CD8-positive, alpha-beta T cell (primary cell): ENCODE measurements at regions of chr3 and their contacts with region 1.

Region 1: DNA sequence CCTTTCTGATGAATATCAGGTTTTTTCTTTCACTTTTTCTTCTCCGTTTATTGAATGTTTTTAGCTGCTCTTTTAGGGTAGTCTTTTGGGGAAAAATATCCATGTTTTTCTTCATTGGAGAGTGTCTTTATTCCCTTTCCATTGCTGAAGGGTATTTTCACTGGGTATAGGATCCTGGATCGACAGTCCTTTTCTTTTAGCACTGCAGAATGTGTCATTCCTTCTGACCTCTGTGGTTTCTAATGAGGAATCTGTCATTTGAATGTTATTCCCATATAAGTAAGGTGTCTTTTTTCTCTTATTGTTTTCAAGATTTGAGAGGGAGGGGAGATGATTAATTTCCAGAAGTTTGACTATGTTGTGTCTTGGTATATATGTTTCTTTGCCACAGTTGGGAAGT is 96.8 kb downstream of the BBX start:
- DNase-seq: no peak
- ATAC-seq: no peak
- H3K4me3 ChIP-seq: no peak overlapping the region
- H3K4me3 Mint-ChIP-seq: no peak overlapping the region
- H3K27ac ChIP-seq: no peak overlapping the region
- H3K27ac Mint-ChIP-seq: no peak overlapping the region
- H3K4me1 ChIP-seq: peaks cover 4% of the 10 kb centered on the region
- H3K4me1 Mint-ChIP-seq: peaks cover 62% of the 10 kb centered on the region
- H3K27me3 ChIP-seq: no peaks in the 10 kb centered on the region
- H3K27me3 Mint-ChIP-seq: no peaks in the 10 kb centered on the region
- CTCF ChIP-seq: no peak

Region 2: GRCh38 chr3:107581230-107581629 is 38.3 kb before region 1 on chr3:
- CTCF ChIA-PET with region 1: no interaction called
- POLR2A ChIA-PET with region 1: no interaction called
- intact Hi-C with region 1: loop called in 1 of 2 experiments (anchors 5 kb)
- DNase-seq: no peak
- ATAC-seq: no peak
- H3K4me3 ChIP-seq: no peak overlapping the region
- H3K4me3 Mint-ChIP-seq: no peak overlapping the region
- H3K27ac ChIP-seq: no peak overlapping the region
- H3K27ac Mint-ChIP-seq: no peak overlapping the region
- H3K4me1 ChIP-seq: peaks cover 6% of the 10 kb centered on the region
- H3K4me1 Mint-ChIP-seq: peaks cover 36% of the 10 kb centered on the region
- H3K27me3 ChIP-seq: no peaks in the 10 kb centered on the region
- H3K27me3 Mint-ChIP-seq: no peaks in the 10 kb centered on the region
- CTCF ChIP-seq: no peak